MCF 10A (cell line): ENCODE measurements at regions of chr6 and their contacts with region 1.

Region 1: DNA sequence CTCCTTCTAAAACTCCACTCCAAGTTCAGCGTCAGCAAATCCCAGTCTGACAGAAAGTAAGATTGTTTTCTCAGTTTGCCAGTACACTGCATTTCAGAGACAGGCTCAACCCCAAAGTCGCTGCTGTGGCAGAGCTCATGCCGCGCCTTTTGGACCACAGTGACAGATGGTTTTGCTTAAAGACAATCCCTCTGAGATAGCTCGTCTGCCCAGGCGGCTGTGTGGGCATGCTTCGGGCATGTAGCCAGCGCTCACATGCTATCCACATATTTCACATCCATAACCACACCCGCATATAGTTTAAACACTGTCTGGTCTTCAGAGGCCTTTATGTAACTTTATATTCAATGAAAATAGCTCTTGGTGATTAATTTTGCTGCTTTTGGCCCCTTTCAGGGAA is 14.7 kb upstream of the PXDC1 start:
- DNase-seq: peak; percentile 40
- H3K4me3 Mint-ChIP-seq: no peak overlapping the region
- H3K27ac Mint-ChIP-seq: peak overlapping the region; percentile 9
- H3K4me1 Mint-ChIP-seq: peaks cover 29% of the 10 kb centered on the region
- H3K27me3 Mint-ChIP-seq: no peaks in the 10 kb centered on the region
- CTCF ChIP-seq: no peak

Region 2: GRCh38 chr6:3798055-3798919 is 32.1 kb after region 1 on chr6:
- CTCF ChIA-PET with region 1: interaction called, 7 read pairs
- POLR2A ChIA-PET with region 1: interaction called, 9 read pairs
- intact Hi-C with region 1: loop called (anchors 5 kb)
- DNase-seq: no peak
- H3K4me3 Mint-ChIP-seq: no peak overlapping the region
- H3K27ac Mint-ChIP-seq: peak overlapping the region; percentile 54
- H3K4me1 Mint-ChIP-seq: peaks cover 22% of the 10 kb centered on the region
- H3K27me3 Mint-ChIP-seq: no peaks in the 10 kb centered on the region
- CTCF ChIP-seq: no peak